ENCODE measurements at regions of chr11 and their contacts with region 1.

Region 1: GRCh38 chr11:95076416-95076815 is 9.7 kb downstream of the SRSF8 start:
- DNase-seq: no peak
- ATAC-seq: peak in 1 of 8 donors; percentile 25
- H3K4me3 ChIP-seq: no peak overlapping the region
- H3K27ac ChIP-seq: no peak overlapping the region
- H3K4me1 ChIP-seq: peaks cover 0 to 25% (median 15%) of the 10 kb centered on the region in 9 donors
- H3K27me3 ChIP-seq: no peaks in the 10 kb centered on the region
- CTCF ChIP-seq: no peak

Region 2: GRCh38 chr11:95108159-95108611 is 31.8 kb after region 1 on chr11:
- intact Hi-C with region 1: loop called in 1 of 10 experiments (anchors 5 kb)
- DNase-seq: peak; percentile 23 to 66
- ATAC-seq: peak; percentile 65 to 96 (median 92)
- H3K4me3 ChIP-seq: peak overlapping the region in 3 of 10 donors; percentile 11 to 17 (median 15)
- H3K27ac ChIP-seq: peak overlapping the region; percentile 43 to 86 (median 80)
- H3K4me1 ChIP-seq: peaks cover 0 to 51% (median 28%) of the 10 kb centered on the region in 9 donors
- H3K27me3 ChIP-seq: no peaks in the 10 kb centered on the region
- CTCF ChIP-seq: no peak

Region 3: GRCh38 chr11:95138448-95138847 is 62.0 kb after region 1 on chr11:
- intact Hi-C with region 1: loop called in 1 of 10 experiments (anchors 5 kb)
- DNase-seq: no peak
- ATAC-seq: peak in 3 of 8 donors; percentile 17 to 61 (median 53)
- H3K4me3 ChIP-seq: no peak overlapping the region
- H3K27ac ChIP-seq: no peak overlapping the region
- H3K4me1 ChIP-seq: peaks cover 0 to 7% (median 4%) of the 10 kb centered on the region in 9 donors
- H3K27me3 ChIP-seq: no peaks in the 10 kb centered on the region
- CTCF ChIP-seq: peak in 6 of 9 donors; percentile 28 to 49 (median 38)